Calu3 (cell line): ENCODE measurements at regions of chr9 and their contacts with region 1.

Region 1: GRCh38 chr9:21985964-21986667 is 8.1 kb downstream of the CDKN2A start:
- DNase-seq: no peak
- H3K4me3 Mint-ChIP-seq: peak overlapping the region; percentile 81
- H3K27ac Mint-ChIP-seq: peak overlapping the region; percentile 89
- H3K4me1 Mint-ChIP-seq: peaks cover 20% of the 10 kb centered on the region
- H3K27me3 Mint-ChIP-seq: no peaks in the 10 kb centered on the region
- CTCF ChIP-seq: no peak

Region 2: DNA sequence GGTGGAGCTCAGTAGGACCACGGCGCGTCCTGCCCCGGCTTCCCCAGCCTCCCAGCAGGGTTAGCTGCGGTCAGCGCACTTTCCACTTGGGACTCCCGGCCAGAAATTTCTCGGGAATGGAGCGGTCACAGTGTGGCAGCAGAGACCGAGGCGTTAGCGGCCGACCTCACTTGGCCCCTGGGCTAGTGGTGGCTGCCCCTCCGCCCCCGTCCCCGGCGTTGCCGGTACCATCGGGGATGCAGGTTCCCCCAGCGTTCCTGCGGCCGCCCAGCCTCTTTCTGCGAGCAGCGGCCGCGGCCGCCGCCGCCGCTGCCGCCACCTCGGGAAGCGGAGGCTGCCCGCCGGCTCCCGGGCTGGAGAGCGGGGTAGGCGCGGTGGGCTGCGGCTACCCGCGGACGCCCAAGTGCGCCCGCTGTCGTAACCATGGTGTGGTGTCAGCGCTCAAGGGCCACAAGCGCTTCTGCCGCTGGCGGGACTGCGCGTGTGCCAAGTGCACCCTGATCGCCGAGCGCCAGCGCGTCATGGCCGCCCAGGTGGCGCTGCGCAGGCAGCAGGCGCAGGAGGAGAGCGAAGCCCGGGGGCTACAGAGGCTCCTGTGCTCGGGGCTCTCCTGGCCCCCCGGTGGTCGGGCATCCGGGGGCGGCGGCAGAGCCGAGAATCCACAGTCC is 461.0 kb after region 1 on chr9:
- CTCF ChIA-PET with region 1: no interaction called
- intact Hi-C with region 1: loop called (anchors 5 kb)
- DNase-seq: peak; percentile 76
- H3K4me3 Mint-ChIP-seq: peak overlapping the region; percentile 77
- H3K27ac Mint-ChIP-seq: peak overlapping the region; percentile 64
- H3K4me1 Mint-ChIP-seq: peaks cover 7% of the 10 kb centered on the region
- H3K27me3 Mint-ChIP-seq: no peaks in the 10 kb centered on the region
- CTCF ChIP-seq: peak; percentile 20